Cardiac septum (tissue), 1 donor: ENCODE measurements at regions of chr1 and their contacts with region 1.

Region 1: GRCh38 chr1:28877132-28877781 is 37.1 kb upstream of the EPB41 start:
- DNase-seq: peak; percentile 88

Region 2: GRCh38 chr1:28518000-28518744 is 359.1 kb before region 1 on chr1:
- intact Hi-C with region 1: loop called (anchors 5 kb)
- DNase-seq: peak; percentile 96

Region 3: GRCh38 chr1:28642847-28643635 is 234.2 kb before region 1 on chr1 and contains the start of gene TAF12:
- intact Hi-C with region 1: loop called (anchors 10 kb)
- DNase-seq: peak; percentile 95
- total RNA-seq, gene TAF12: 17.3 TPM

Region 4: GRCh38 chr1:28682840-28683239 is 194.4 kb before region 1 on chr1:
- intact Hi-C with region 1: no loop called
- DNase-seq: no peak

Region 5: DNA sequence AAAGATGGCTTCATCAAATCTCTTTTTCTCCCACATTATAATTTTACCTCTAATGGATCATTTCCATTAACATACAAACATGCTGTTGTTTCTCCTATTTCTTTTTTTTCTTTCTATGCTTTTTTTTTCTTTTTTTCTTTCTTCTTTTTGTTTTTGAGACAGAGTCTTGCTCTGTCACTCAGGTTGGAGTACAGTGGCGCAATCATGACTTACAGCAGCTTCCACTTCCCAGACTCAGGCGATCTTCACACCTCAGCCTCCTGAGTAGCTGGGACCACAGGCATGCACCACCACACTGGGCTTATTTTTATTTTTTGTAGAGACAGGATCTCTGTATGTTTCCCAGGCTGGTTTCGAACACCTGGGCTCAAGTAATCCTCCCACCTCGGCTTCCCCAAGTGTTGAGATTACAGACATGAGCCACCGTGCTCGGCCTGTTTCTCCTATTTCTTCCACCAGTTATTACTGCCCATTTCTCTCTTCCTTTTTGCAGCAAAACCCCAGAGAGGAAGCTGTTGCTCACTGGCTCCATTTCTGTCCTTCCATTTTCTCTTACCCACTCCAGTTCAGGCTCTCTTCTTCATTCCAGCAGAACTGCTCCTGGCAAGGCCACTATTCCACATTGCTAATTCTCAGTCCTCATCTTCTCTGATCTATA is 97.4 kb before region 1 on chr1:
- intact Hi-C with region 1: loop called (anchors 2 kb)
- DNase-seq: no peak

Region 6: GRCh38 chr1:29022620-29023019 is 145.4 kb after region 1 on chr1:
- intact Hi-C with region 1: no loop called
- DNase-seq: no peak